MCF 10A (cell line): ENCODE measurements at regions of chr2 and their contacts with region 1.

Region 1: DNA sequence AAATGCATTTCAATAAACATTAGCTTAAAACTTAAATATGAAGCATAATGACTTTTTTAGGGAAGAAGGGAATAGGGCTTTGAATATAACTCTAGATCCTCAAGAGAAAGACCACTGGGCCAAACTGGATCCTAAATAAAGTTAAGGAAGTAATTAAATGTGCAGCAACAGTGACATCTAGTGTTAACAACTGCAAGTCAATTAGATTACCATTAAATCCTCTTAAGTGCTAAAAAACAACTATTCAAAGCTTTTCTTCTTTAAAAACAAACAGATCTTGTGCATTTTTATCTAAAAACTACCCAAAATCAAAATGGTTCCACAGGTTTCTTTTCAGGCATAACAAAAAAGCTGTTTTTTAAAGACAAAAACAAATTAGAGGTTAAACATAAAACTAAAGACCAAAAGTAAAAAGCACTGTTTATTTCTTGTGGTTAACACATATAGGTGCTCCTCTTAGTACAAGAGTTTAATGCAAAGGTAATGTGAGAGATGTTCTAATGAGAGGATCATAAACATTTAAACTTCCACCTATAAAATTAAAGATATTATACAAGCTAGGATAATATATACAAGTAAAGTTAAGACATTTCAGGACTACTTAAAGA is 111.4 kb downstream of the THADA start:
- DNase-seq: peak; percentile 74
- H3K4me3 Mint-ChIP-seq: no peak overlapping the region
- H3K27ac Mint-ChIP-seq: peak overlapping the region; percentile 96
- H3K4me1 Mint-ChIP-seq: peaks cover 37% of the 10 kb centered on the region
- H3K27me3 Mint-ChIP-seq: no peaks in the 10 kb centered on the region
- CTCF ChIP-seq: peak; percentile 59

Region 2: GRCh38 chr2:42828487-42829425 is 655.7 kb before region 1 on chr2:
- CTCF ChIA-PET with region 1: interaction called, 15 read pairs
- POLR2A ChIA-PET with region 1: interaction called, 3 read pairs
- intact Hi-C with region 1: loop called (anchors 2 kb)
- DNase-seq: peak; percentile 77
- H3K4me3 Mint-ChIP-seq: no peak overlapping the region
- H3K27ac Mint-ChIP-seq: peak overlapping the region; percentile 19
- H3K4me1 Mint-ChIP-seq: peaks cover 26% of the 10 kb centered on the region
- H3K27me3 Mint-ChIP-seq: no peaks in the 10 kb centered on the region
- CTCF ChIP-seq: peak; percentile 90

Region 3: DNA sequence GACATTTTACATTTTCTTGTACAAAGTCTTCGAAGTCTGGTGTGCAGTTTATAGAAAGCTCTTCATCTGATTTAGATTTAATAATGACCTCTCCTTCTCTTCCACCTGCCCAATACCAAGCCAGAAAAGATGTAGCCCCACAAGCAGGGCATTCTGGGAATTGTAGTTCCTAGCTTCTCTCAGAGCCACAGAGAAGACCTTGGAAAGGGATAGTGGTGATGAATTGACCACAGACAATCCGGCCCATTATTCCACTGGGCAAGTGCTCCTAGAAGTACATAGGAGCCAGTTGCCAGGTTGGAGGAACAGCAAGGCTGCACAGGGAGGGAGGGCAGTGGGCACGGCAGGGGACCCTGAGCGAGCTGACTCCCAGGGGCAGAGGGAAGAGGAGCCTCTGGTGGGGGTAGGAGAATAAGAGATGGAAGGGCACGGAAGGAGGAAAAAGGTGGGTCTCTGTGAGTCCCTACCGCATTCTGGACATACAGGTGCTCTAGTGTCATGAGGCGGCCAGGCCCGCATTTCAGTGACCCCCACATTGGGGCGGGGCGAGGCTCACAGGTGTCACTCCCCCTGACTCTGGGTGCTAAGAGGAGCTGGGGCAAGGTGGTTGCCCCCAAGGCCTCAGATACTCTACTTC is 539.5 kb before region 1 on chr2:
- CTCF ChIA-PET with region 1: interaction called, 48 read pairs
- POLR2A ChIA-PET with region 1: interaction called, 7 read pairs
- intact Hi-C with region 1: no loop called
- DNase-seq: no peak
- H3K4me3 Mint-ChIP-seq: no peak overlapping the region
- H3K27ac Mint-ChIP-seq: no peak overlapping the region
- H3K4me1 Mint-ChIP-seq: peaks cover 10% of the 10 kb centered on the region
- H3K27me3 Mint-ChIP-seq: no peaks in the 10 kb centered on the region
- CTCF ChIP-seq: no peak

Region 4: GRCh38 chr2:43293744-43294695 is 190.4 kb before region 1 on chr2:
- CTCF ChIA-PET with region 1: interaction called, 3 read pairs
- POLR2A ChIA-PET with region 1: interaction called, 3 read pairs
- intact Hi-C with region 1: loop called (anchors 5 kb)
- DNase-seq: peak; percentile 97
- H3K4me3 Mint-ChIP-seq: peak overlapping the region; percentile 21
- H3K27ac Mint-ChIP-seq: peak overlapping the region; percentile 84
- H3K4me1 Mint-ChIP-seq: peaks cover 19% of the 10 kb centered on the region
- H3K27me3 Mint-ChIP-seq: no peaks in the 10 kb centered on the region
- CTCF ChIP-seq: no peak

Region 5: DNA sequence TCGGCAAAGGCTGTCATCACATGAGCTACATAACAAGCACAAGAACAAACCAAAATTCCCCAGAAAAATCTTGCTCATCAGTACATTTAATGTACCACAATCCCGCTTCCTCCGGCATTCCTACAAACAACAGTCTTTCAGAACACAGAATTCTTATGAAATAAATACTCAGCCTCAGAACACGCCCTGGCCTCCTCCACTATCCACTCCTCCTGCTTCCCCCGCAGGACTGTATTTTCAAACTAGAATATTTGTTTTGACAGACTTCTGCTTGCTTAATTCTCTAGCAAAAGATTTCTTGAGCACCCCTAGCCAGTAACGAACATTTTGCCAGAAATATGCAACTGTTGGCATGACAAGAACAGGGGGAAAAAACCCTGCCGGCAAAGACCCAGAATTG is 19.8 kb before region 1 on chr2:
- CTCF ChIA-PET with region 1: interaction called, 7 read pairs
- POLR2A ChIA-PET with region 1: interaction called, 37 read pairs
- intact Hi-C with region 1: no loop called
- DNase-seq: peak; percentile 59
- H3K4me3 Mint-ChIP-seq: peak overlapping the region; percentile 35
- H3K27ac Mint-ChIP-seq: peak overlapping the region; percentile 95
- H3K4me1 Mint-ChIP-seq: peaks cover 56% of the 10 kb centered on the region
- H3K27me3 Mint-ChIP-seq: no peaks in the 10 kb centered on the region
- CTCF ChIP-seq: no peak

Region 6: DNA sequence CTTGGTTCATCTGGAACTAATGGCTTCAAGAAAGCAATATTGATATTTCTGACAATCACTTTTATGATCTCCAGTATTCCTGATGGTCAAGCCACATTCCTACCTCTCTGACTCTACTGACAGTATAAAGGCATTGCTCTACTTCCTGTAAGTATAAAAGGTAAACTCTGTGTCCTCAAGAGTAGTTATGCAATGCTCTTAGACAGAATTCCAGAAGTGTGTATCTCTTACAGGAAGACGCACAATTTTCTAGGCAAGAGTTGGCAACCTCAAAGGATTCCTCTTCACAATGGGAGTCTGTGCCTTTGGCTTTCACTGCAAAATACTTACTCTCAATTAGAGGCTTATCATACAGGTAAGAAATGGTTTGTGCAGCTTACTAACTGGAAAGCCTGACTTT is 11.3 kb after region 1 on chr2:
- CTCF ChIA-PET with region 1: interaction called, 7 read pairs
- POLR2A ChIA-PET with region 1: interaction called, 13 read pairs
- intact Hi-C with region 1: no loop called
- DNase-seq: peak; percentile 70
- H3K4me3 Mint-ChIP-seq: no peak overlapping the region
- H3K27ac Mint-ChIP-seq: peak overlapping the region; percentile 77
- H3K4me1 Mint-ChIP-seq: peaks cover 28% of the 10 kb centered on the region
- H3K27me3 Mint-ChIP-seq: no peaks in the 10 kb centered on the region
- CTCF ChIP-seq: no peak

Region 7: GRCh38 chr2:43777306-43777926 is 293.0 kb after region 1 on chr2:
- CTCF ChIA-PET with region 1: no interaction called
- POLR2A ChIA-PET with region 1: no interaction called
- intact Hi-C with region 1: no loop called
- DNase-seq: no peak
- H3K4me3 Mint-ChIP-seq: no peak overlapping the region
- H3K27ac Mint-ChIP-seq: no peak overlapping the region
- H3K4me1 Mint-ChIP-seq: no peaks in the 10 kb centered on the region
- H3K27me3 Mint-ChIP-seq: no peaks in the 10 kb centered on the region
- CTCF ChIP-seq: no peak